ENCODE measurements at regions of chr13 and their contacts with region 1.

Region 1: DNA sequence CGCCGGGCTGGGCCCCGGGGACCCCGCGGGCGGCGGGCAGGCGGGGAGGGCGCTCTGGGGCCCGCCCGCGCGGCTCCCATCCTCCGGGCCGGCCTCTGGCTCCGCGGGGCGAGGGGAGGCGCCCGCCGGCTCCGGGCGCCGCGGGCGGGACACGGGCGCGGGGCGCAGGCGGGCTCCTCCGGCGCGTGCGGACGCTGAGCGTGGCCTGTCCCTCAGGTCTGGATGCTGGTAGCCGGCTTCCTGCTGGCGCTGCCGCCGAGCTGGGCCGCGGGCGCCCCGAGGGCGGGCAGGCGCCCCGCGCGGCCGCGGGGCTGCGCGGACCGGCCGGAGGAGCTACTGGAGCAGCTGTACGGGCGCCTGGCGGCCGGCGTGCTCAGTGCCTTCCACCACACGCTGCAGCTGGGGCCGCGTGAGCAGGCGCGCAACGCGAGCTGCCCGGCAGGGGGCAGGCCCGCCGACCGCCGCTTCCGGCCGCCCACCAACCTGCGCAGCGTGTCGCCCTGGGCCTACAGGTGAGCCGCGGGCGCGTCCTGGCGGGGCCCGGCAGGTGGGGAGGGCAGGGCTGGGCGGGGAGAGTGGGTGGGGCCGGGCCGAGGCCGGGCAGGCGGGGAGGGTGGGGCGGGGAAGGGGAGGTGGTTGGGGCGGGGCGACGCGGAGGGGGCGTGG is 414 bp downstream of the IL17D start:
- DNase-seq: peak; percentile 82
- H3K4me3 Mint-ChIP-seq: no peak overlapping the region
- H3K27ac Mint-ChIP-seq: no peak overlapping the region
- H3K4me1 Mint-ChIP-seq: peaks cover 15% of the 10 kb centered on the region
- H3K27me3 Mint-ChIP-seq: peaks cover 17% of the 10 kb centered on the region

Region 2: DNA sequence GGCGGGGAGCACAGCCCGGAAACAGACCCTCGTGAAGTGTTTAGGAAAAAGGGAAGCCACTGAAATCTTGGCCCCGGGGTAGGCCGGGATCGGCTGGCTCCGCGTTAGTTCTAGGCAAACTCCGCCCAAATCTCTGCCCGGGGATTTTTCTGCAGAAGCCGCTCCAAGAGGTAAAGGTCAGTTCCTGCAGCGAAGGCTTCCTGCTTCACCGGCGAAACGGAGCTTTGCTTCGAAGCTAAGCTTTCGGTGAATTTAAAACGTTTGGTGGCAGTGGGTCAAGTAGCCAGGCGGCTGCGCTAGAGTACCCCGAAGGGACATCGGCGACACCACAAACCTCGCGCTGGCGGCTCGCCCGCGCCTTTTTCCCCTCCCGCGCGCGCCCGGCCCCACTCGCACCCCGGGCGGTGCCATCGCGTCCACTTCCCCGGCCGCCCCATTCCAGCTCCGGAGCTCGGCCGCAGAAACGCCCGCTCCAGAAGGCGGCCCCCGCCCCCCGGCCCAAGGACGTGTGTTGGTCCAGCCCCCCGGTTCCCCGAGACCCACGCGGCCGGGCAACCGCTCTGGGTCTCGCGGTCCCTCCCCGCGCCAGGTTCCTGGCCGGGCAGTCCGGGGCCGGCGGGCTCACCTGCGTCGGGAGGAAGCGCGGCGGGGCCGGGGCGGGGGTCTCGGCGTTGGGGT is 511.6 kb before region 1 on chr13:
- CTCF ChIA-PET with region 1: interaction called, 3 read pairs
- POLR2A ChIA-PET with region 1: no interaction called
- intact Hi-C with region 1: loop called (anchors 5 kb)
- DNase-seq: peak; percentile 22
- H3K4me3 Mint-ChIP-seq: peak overlapping the region; percentile 64
- H3K27ac Mint-ChIP-seq: no peak overlapping the region
- H3K4me1 Mint-ChIP-seq: peaks cover 17% of the 10 kb centered on the region
- H3K27me3 Mint-ChIP-seq: peaks cover 49% of the 10 kb centered on the region

Region 3: GRCh38 chr13:20411638-20412360 is 292.1 kb before region 1 on chr13:
- CTCF ChIA-PET with region 1: no interaction called
- POLR2A ChIA-PET with region 1: no interaction called
- intact Hi-C with region 1: loop called (anchors 5 kb)
- DNase-seq: peak; percentile 75
- H3K4me3 Mint-ChIP-seq: peak overlapping the region; percentile 9
- H3K27ac Mint-ChIP-seq: peak overlapping the region; percentile 78
- H3K4me1 Mint-ChIP-seq: peaks cover 22% of the 10 kb centered on the region
- H3K27me3 Mint-ChIP-seq: no peaks in the 10 kb centered on the region

Region 4: DNA sequence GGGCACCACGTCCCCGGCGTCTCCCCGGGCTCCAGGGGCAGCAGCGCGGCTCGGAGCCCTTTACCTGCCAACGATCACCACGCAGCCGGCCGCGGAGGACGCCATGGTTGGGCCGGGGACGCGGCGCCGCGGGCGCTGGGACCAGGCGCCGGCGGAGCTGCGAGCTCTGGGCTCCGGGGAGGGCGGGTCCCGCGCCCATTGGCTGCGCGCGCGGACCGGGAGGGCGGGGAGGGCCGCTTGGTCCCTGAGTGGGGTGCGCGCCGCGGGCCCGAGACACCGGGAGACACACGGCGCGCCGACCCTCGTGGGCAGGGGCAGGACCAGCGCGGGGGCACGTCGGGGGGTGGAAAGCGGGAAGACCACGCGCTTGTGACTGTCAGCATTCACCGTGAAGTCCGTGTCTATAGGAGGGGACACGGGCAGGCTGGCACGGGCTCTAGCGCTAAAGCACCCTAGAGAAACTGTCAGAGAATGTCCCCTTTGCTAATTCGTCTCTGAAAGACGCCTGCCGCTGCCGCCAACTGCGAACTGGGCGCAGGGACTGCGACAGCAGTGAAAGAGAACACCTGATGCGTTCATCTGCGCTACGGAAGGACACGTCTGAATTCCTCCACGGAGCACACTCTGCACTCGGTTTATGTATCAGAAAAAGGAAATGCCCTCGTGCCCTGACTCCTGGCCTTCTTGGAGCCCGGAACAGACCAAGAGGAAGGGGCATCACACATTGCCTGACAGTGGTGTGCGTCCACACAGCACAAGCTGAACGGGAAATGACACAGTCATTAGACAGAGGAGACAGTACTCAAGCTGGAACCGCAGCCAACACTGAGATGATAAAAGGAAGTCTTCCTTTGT is 178.0 kb before region 1 on chr13 and contains the start of gene CRYL1:
- CTCF ChIA-PET with region 1: no interaction called
- POLR2A ChIA-PET with region 1: no interaction called
- intact Hi-C with region 1: loop called (anchors 1 kb)
- DNase-seq: peak; percentile 77
- H3K4me3 Mint-ChIP-seq: peak within 1 kb of the TSS; percentile 84
- H3K27ac Mint-ChIP-seq: peak within 1 kb of the TSS; percentile 86
- H3K4me1 Mint-ChIP-seq: peaks cover 33% of the 10 kb centered on the region
- H3K27me3 Mint-ChIP-seq: peaks cover 5% of the 10 kb centered on the region
- total RNA-seq, gene CRYL1: 17.5 to 18.2 TPM

Region 5: GRCh38 chr13:20672772-20673171 is 31.1 kb before region 1 on chr13:
- CTCF ChIA-PET with region 1: no interaction called
- POLR2A ChIA-PET with region 1: no interaction called
- intact Hi-C with region 1: no loop called
- DNase-seq: no peak
- H3K4me3 Mint-ChIP-seq: no peak overlapping the region
- H3K27ac Mint-ChIP-seq: no peak overlapping the region
- H3K4me1 Mint-ChIP-seq: no peaks in the 10 kb centered on the region
- H3K27me3 Mint-ChIP-seq: no peaks in the 10 kb centered on the region

Measured in activated CD4-positive, alpha-beta memory T cell treated with anti-CD3 and anti-CD28 coated beads for 36 hours (primary cell).